ENCODE measurements at regions of chr3 and their contacts with region 1.

Region 1: GRCh38 chr3:192467230-192468140 is 259.9 kb downstream of the FGF12 start:
- DNase-seq: peak; percentile 28 to 55
- ATAC-seq: peak; percentile 75

Region 2: DNA sequence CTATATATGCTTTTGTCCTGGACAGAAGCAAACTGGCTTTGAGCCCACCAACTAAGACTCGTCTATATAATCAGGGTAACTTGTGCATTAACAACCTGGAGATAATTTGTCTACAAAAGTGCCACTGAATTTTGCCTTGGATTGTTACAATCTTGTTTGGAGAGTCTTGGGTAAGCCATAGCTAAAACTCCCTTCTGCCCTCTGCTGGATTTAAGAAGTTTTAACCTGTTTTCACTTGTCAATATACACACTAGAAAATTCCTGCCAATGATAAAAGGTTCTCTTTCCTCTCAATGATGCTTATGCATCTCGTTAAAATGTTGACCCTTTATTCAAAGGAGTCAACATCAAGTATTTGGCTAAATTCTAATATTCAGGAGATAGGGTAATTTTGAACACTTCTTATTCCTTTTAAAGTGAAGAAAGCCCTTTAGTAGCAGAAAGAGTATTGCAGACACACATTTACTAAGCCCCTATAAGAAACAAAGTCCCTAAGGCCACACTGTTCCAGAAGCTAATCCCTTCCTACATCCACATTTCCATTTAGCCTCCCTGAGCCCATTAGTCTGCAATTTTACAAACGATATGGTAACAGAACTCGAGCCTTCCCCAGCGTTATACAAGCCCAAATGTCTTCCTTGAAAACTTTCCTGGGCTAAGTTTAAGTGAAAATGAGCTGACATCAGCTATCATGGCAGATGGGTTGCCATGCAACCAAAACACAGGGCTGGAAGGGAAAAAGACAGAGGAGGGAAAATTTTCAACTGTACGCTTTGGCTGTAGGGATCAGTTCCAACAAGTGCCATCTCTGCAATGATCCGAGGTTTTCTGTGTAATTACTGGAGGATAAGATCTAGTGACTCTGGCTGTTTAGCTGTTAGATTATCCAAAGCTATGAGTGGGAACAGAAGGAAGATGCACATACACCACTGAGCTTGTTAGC is 335.7 kb after region 1 on chr3:
- intact Hi-C with region 1: loop called in 1 of 2 experiments (anchors 10 kb)
- DNase-seq: no peak
- ATAC-seq: peak; percentile 47

Region 3: DNA sequence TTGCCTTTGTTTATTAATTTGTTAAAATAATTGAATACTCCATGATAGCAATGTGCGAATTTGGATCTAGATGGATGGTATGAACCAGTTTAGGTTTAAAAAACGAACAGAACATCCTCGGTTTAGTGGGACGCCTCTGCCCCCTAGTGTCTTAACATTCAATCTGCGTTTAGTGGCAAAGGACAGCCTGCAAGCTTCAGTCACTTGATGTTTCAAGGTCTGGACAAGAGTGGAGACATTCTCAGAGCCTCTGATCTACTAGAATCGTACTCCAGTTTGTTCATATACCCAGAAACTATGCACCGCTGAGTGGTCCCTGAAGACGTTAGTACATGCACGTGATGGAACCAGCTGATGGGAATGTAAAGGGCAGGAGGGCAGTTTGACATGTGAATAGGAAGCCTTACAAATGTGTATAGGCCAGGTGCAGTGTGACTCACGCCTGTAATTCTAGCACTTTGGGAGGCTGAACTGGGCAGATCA is 1105.0 kb after region 1 on chr3:
- intact Hi-C with region 1: loop called in 1 of 2 experiments (anchors 10 kb)
- DNase-seq: peak in 1 of 2 donors; percentile 42
- ATAC-seq: peak; percentile 86

Measured in left colon (tissue), 2 donors.